Posterior cingulate gyrus (tissue), 11 donors: ENCODE measurements at regions of chr12 and their contacts with region 1.

Region 1: DNA sequence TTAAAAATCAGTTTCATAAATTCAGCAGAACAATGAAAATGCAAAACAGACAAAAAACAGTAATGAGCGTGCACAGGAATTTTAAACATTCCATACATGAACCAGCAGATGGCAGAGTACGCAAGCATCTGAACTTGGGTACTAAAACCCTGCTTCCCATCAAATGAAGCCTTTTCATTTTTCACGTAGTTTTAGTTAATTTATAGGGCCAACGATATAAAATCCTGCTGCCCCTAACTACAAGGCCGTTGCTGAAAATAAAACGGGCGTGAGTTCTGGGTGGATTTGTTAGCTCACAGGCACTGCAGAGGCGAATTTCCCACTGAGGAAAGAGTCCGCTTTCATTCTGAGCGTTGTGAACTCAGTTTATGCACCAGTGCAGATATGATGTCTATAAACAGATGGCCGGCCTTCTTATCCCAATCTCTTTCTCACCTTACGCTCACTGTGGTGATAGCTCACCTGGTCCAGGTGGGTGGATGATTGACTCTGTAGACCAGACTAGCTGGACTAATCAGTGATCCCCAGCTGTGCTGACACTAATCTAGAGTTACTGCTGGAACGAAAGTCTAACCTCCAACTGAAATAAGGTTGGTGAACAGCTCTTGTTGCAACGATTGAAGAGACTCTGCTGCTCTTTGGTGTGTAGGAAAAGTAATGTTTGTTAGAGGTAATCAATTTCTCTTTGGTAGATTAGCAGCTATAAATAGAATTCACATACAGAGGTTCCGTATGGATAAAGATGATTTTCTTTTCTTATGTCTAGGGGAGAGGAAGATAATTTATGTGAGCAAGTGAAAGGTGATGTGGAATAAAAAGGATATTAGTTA is 89.2 kb downstream of the PDZRN4 start:
- DNase-seq: peak in 5 of 10 donors; percentile 7 to 57 (median 28)

Region 2: GRCh38 chr12:41213107-41213506 is 64.2 kb before region 1 on chr12:
- intact Hi-C with region 1: no loop called
- DNase-seq: peak in 5 of 10 donors; percentile 9 to 80 (median 29)

Region 3: GRCh38 chr12:41437563-41437962 is 160.2 kb after region 1 on chr12:
- intact Hi-C with region 1: loop called (anchors 10 kb)
- DNase-seq: peak in 1 of 10 donors; percentile 17

Region 4: GRCh38 chr12:41663598-41664258 is 386.4 kb after region 1 on chr12:
- intact Hi-C with region 1: loop called (anchors 5 kb)
- DNase-seq: no peak

Region 5: DNA sequence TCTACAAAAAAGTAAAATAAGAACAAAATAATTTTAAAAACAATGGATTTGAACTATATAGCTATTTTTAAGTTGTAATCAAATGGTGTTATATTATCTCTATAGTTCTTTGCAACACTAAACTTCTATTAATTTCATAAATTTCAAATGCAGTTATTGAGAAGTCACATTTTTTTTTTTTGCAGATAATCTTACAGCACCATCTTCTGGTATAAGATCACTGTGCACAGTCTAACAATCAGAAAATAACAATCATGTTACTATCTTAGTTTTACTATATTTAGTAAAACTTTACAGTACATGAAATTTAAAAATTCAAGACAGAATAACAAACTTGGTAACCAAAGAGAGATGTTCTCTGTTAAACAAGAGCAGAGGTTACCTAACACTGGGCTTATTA is 826.8 kb after region 1 on chr12:
- intact Hi-C with region 1: loop called (anchors 10 kb)
- DNase-seq: no peak